IMR-90 (cell line): ENCODE measurements at regions of chr1 and their contacts with region 1.

Region 1: GRCh38 chr1:157019457-157019856 is 26.1 kb downstream of the ARHGEF11 start:
- DNase-seq: no peak
- ATAC-seq: no peak
- H3K4me3 ChIP-seq: no peak overlapping the region
- H3K27ac ChIP-seq: no peak overlapping the region
- H3K4me1 ChIP-seq: no peaks in the 10 kb centered on the region
- H3K27me3 ChIP-seq: no peaks in the 10 kb centered on the region
- CTCF ChIP-seq: no peak
- POLR2A ChIP-seq: no peak
- RAD21 ChIP-seq: no peak

Region 2: GRCh38 chr1:156980551-156980950 is 38.9 kb before region 1 on chr1:
- CTCF ChIA-PET with region 1: no interaction called
- POLR2A ChIA-PET with region 1: interaction called, 10 read pairs
- dilution Hi-C with region 1: no loop called
- in situ Hi-C with region 1: no loop called
- intact Hi-C with region 1: no loop called
- DNase-seq: no peak
- ATAC-seq: no peak
- H3K4me3 ChIP-seq: no peak overlapping the region
- H3K27ac ChIP-seq: no peak overlapping the region
- H3K4me1 ChIP-seq: no peaks in the 10 kb centered on the region
- H3K27me3 ChIP-seq: no peaks in the 10 kb centered on the region
- CTCF ChIP-seq: no peak
- POLR2A ChIP-seq: no peak
- RAD21 ChIP-seq: no peak